ENCODE measurements at regions of chr11 and their contacts with region 1.

Region 1: GRCh38 chr11:134223836-134224709 is at the starts of genes NCAPD3 and VPS26B:
- DNase-seq: peak; percentile 94 to 99
- ATAC-seq: peak; percentile 77 to 91 (median 82)
- H3K4me3 ChIP-seq: peak within 1 kb of the TSS; percentile 80
- H3K4me3 Mint-ChIP-seq: peak within 1 kb of the TSS; percentile 96
- H3K27ac ChIP-seq: peak within 1 kb of the TSS; percentile 73
- H3K27ac Mint-ChIP-seq: peak within 1 kb of the TSS; percentile 96 to 97
- H3K4me1 ChIP-seq: peaks cover 34% of the 10 kb centered on the region
- H3K4me1 Mint-ChIP-seq: peaks cover 64% of the 10 kb centered on the region in 2 donors
- H3K27me3 ChIP-seq: no peaks in the 10 kb centered on the region
- H3K27me3 Mint-ChIP-seq: no peaks in the 10 kb centered on the region
- CTCF ChIP-seq: no peak
- total RNA-seq, gene NCAPD3: 27.6 to 33.6 (median 31.2) TPM
- total RNA-seq, gene VPS26B: 83.0 to 113 (median 107) TPM

Region 2: GRCh38 chr11:134253188-134253993 is 29.3 kb after region 1 on chr11 and contains the starts of genes ACAD8 and THYN1:
- intact Hi-C with region 1: loop called (anchors 1 kb)
- DNase-seq: peak; percentile 88 to 98
- ATAC-seq: peak; percentile 99 to 100 (median 100)
- H3K4me3 ChIP-seq: peak within 1 kb of the TSS; percentile 74
- H3K4me3 Mint-ChIP-seq: peak within 1 kb of the TSS; percentile 98
- H3K27ac ChIP-seq: peak within 1 kb of the TSS; percentile 50
- H3K27ac Mint-ChIP-seq: peak within 1 kb of the TSS; percentile 75 to 79
- H3K4me1 ChIP-seq: peaks cover 15% of the 10 kb centered on the region
- H3K4me1 Mint-ChIP-seq: peaks cover 19 to 47% of the 10 kb centered on the region in 2 donors
- H3K27me3 ChIP-seq: no peaks in the 10 kb centered on the region
- H3K27me3 Mint-ChIP-seq: no peaks in the 10 kb centered on the region
- CTCF ChIP-seq: no peak
- total RNA-seq, gene ACAD8: 24.3 to 42.5 (median 39.3) TPM
- total RNA-seq, gene THYN1: 21.6 to 25.4 (median 24.0) TPM

Region 3: GRCh38 chr11:134270250-134270714 is 46.2 kb after region 1 on chr11:
- intact Hi-C with region 1: no loop called
- DNase-seq: peak in 1 of 2 donors; percentile 68
- ATAC-seq: peak in 2 of 3 donors; percentile 32 to 45
- H3K4me3 ChIP-seq: no peak overlapping the region
- H3K4me3 Mint-ChIP-seq: peak overlapping the region; percentile 5
- H3K27ac ChIP-seq: no peak overlapping the region
- H3K27ac Mint-ChIP-seq: no peak overlapping the region
- H3K4me1 ChIP-seq: peaks cover 11% of the 10 kb centered on the region
- H3K4me1 Mint-ChIP-seq: peaks cover 13 to 17% of the 10 kb centered on the region in 2 donors
- H3K27me3 ChIP-seq: peaks cover 11% of the 10 kb centered on the region
- H3K27me3 Mint-ChIP-seq: peaks cover 36 to 42% of the 10 kb centered on the region in 2 donors
- CTCF ChIP-seq: no peak

Region 4: GRCh38 chr11:134584706-134585433 is 360.8 kb after region 1 on chr11:
- intact Hi-C with region 1: loop called (anchors 10 kb)
- DNase-seq: no peak
- ATAC-seq: no peak
- H3K4me3 ChIP-seq: no peak overlapping the region
- H3K4me3 Mint-ChIP-seq: peak overlapping the region; percentile 88
- H3K27ac ChIP-seq: no peak overlapping the region
- H3K27ac Mint-ChIP-seq: peak overlapping the region; percentile 86 to 89
- H3K4me1 ChIP-seq: peaks cover 47% of the 10 kb centered on the region
- H3K4me1 Mint-ChIP-seq: peaks cover 54 to 63% of the 10 kb centered on the region in 2 donors
- H3K27me3 ChIP-seq: no peaks in the 10 kb centered on the region
- H3K27me3 Mint-ChIP-seq: peaks cover 14 to 25% of the 10 kb centered on the region in 2 donors
- CTCF ChIP-seq: no peak

Measured in natural killer cell (primary cell).